PC-3 (cell line): ENCODE measurements at regions of chr14 and their contacts with region 1.

Region 1: GRCh38 chr14:63770187-63770807 is 42.4 kb upstream of the SGPP1 start:
- DNase-seq: peak; percentile 79
- ATAC-seq: peak; percentile 99
- H3K4me3 ChIP-seq: no peak overlapping the region
- H3K27ac ChIP-seq: no peak overlapping the region
- H3K4me1 ChIP-seq: no peaks in the 10 kb centered on the region
- H3K27me3 ChIP-seq: no peaks in the 10 kb centered on the region
- CTCF ChIP-seq: peak; percentile 90

Region 2: GRCh38 chr14:62162998-62163589 is 1607.2 kb before region 1 on chr14:
- CTCF ChIA-PET with region 1: no interaction called
- POLR2A ChIA-PET with region 1: no interaction called
- intact Hi-C with region 1: loop called (anchors 10 kb)
- DNase-seq: peak; percentile 79
- ATAC-seq: peak; percentile 92
- H3K4me3 ChIP-seq: no peak overlapping the region
- H3K27ac ChIP-seq: no peak overlapping the region
- H3K4me1 ChIP-seq: no peaks in the 10 kb centered on the region
- H3K27me3 ChIP-seq: peaks cover 43% of the 10 kb centered on the region
- CTCF ChIP-seq: peak; percentile 95

Region 3: DNA sequence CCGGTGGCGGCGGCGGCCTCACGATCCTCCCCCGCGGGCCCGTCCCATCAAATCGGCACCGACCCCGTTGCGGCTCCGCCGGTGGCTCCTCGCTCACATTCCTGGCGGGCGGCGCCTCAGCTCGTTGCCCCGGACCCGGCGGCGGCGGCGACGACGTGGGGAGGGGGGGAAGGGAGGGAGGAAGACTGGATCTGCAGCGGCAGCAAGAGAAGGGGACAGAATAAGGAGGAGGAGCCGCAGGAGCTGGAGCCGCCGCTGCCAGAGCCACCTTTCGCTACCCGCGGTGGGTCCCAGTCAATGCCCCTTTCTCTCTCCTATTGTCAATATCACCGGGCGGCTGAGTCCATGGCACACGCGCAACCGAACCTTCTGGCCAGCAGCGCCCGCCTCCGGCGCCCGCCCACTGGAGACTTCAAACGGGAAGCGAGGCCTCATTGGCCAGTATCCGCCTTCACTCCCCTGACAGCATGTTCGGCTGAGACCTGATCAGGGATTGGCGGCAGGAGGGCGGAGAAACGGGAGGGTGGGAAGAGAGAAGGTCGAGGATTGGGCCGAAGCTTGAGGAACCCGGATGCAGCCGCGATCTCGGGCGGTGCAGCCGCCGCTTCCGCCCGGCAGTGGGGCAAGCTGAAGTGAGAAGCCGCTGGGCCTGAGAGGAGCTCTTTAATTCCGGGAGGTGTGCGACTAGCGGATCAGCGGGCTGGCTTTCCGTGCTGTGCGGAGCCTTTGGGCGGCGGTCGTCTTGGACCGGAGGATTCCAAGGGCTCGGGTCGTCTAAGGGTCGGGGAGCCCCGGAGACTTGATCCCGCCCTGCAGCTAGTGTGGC is 227.1 kb before region 1 on chr14 and contains the start of gene PPP2R5E:
- CTCF ChIA-PET with region 1: interaction called, 3 read pairs
- POLR2A ChIA-PET with region 1: no interaction called
- intact Hi-C with region 1: loop called (anchors 1 kb)
- DNase-seq: peak; percentile 99
- ATAC-seq: peak; percentile 94
- H3K4me3 ChIP-seq: peak within 1 kb of the TSS; percentile 90
- H3K27ac ChIP-seq: peak within 1 kb of the TSS; percentile 61
- H3K4me1 ChIP-seq: peaks cover 19% of the 10 kb centered on the region
- H3K27me3 ChIP-seq: no peaks in the 10 kb centered on the region
- CTCF ChIP-seq: no peak
- total RNA-seq, gene PPP2R5E: 17.2 and 26.4 TPM in 2 replicates

Region 4: GRCh38 chr14:63632932-63633514 is 137.3 kb before region 1 on chr14:
- CTCF ChIA-PET with region 1: interaction called, 17 read pairs
- POLR2A ChIA-PET with region 1: no interaction called
- intact Hi-C with region 1: loop called (anchors 1 kb)
- DNase-seq: peak; percentile 71
- ATAC-seq: peak; percentile 88
- H3K4me3 ChIP-seq: no peak overlapping the region
- H3K27ac ChIP-seq: no peak overlapping the region
- H3K4me1 ChIP-seq: 0 out of 2 replicates have a peak, but pooled peaks cover 4% of the 10 kb centered on the region
- H3K27me3 ChIP-seq: no peaks in the 10 kb centered on the region
- CTCF ChIP-seq: peak; percentile 82

Region 5: GRCh38 chr14:63727774-63728728 is 42.2 kb before region 1 on chr14 and contains the start of gene SGPP1:
- CTCF ChIA-PET with region 1: interaction called, 9 read pairs
- POLR2A ChIA-PET with region 1: interaction called, 3 read pairs
- intact Hi-C with region 1: loop called (anchors 1 kb)
- DNase-seq: peak; percentile 84
- ATAC-seq: peak; percentile 91
- H3K4me3 ChIP-seq: peak within 1 kb of the TSS; percentile 84
- H3K27ac ChIP-seq: peak within 1 kb of the TSS; percentile 58
- H3K4me1 ChIP-seq: peaks cover 20% of the 10 kb centered on the region
- H3K27me3 ChIP-seq: no peaks in the 10 kb centered on the region
- CTCF ChIP-seq: peak; percentile 32; the same call in 1 of the 2 replicates
- total RNA-seq, gene SGPP1: 15.9 and 19.3 TPM in 2 replicates